GM13977 (cell line): ENCODE measurements at regions of chr10 and their contacts with region 1.

Region 1: DNA sequence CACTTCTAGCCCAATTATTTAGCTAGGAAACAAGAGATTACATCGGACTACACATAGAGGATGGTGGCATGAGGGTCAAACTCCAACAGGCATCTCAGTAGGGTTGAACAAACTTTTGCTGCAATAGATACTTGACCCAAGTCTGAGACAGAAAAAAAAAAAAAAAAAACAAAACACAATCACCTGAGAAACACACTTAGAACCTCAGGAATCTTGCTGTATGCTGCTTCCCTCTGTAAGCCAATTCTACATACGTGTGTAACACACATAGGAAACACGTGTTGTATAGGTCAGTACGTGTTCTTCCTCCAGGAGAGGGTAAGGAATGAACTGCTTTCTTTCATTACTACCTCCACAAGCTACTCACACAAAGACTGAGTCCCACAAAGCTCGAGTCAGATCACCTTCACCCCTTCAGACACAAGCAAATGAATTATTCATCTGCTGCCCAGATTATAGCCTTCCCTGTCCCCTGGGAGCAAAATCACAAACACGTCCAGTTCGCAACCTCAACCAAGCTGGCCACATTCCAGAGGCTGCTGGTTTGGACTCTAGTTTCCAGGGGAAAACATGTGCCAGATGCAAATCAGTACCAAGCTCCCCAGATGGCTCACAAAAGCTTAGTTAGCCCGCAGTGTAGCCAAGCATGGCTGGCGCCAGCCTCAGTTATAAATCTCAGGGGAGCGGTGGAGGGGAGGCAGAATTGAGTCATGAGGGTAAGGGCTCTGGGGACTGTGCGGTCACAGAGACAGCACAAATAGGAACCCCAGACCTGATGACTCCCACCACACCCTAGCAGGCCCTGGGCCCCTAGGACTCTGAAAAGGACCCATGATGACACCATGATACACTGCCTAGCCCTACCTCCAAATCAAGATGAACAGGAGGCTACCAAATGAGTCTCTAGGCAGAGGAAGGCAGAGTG is 15.1 kb downstream of the PSAP start:
- DNase-seq: peak; percentile 89
- CTCF ChIP-seq: no peak

Region 2: DNA sequence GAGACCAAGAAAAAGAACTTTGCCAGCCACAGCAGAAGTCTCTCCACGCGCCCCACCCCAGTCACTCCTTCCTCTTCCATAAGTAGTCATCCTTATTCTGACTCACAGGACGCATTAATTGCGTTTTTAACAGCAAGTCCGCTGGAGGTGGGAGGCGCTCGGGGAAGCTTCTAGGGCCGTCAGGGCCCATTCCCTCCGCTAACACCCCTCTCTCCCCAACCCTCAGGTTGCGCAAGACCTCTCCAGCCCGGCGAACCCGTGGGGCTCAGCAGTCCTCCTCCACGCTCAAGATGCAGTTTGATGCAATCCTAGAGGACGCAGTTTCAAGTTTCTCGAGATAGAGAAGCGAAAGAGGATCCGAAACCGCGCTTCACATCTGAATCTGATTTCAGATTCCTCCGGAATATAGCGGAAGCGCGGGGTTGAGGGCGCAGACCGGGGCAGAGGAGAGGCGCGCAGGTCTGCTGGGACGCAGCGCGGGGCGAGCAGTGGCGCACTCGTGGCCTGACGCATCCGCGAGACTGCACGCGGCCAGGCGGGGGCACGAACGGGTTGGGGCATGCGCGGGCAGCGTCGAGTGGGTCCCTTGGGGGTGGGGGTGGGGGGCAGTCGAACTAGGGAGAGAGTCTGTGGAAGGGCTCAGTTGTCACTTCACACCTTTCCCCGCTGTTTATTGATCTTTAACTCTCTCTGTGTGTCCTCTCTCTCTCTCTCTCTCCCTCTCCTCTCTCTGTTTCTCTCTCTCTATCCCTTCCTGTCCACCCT is 52.9 kb after region 1 on chr10:
- in situ Hi-C with region 1: loop called (anchors 10 kb)
- DNase-seq: peak; percentile 82
- CTCF ChIP-seq: peak; percentile 30